ENCODE measurements at regions of chr1 and their contacts with region 1.

Region 1: DNA sequence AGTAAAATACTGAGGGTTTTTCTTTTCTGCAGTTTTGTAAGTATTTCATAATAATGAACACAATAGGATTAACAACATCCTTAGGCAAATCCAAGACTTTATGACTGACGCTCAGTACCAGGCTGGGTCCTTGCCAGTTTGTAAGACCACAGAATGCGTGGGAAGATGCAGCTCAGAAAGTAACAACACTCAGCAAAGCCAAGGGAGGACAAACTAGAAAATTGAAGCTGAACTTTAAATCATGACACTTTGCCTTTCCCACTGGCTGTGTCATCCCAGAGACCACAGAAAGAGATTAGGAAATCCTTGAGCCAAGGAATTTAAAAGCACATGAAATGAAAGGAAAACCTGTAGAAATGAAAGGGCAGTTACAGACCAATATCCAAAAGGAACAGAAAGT is 426.3 kb upstream of the CHRM3 start:
- DNase-seq: peak; percentile 50
- H3K27ac ChIP-seq: no peak overlapping the region
- CTCF ChIP-seq: no peak

Region 2: GRCh38 chr1:238892612-238893011 is 67.5 kb before region 1 on chr1:
- CTCF ChIA-PET with region 1: interaction called, 10 read pairs
- POLR2A ChIA-PET with region 1: no interaction called
- DNase-seq: peak; percentile 84
- H3K27ac ChIP-seq: no peak overlapping the region
- CTCF ChIP-seq: no peak

Measured in RWPE1 (cell line).